ENCODE measurements at regions of chr19 and their contacts with region 1.

Region 1: DNA sequence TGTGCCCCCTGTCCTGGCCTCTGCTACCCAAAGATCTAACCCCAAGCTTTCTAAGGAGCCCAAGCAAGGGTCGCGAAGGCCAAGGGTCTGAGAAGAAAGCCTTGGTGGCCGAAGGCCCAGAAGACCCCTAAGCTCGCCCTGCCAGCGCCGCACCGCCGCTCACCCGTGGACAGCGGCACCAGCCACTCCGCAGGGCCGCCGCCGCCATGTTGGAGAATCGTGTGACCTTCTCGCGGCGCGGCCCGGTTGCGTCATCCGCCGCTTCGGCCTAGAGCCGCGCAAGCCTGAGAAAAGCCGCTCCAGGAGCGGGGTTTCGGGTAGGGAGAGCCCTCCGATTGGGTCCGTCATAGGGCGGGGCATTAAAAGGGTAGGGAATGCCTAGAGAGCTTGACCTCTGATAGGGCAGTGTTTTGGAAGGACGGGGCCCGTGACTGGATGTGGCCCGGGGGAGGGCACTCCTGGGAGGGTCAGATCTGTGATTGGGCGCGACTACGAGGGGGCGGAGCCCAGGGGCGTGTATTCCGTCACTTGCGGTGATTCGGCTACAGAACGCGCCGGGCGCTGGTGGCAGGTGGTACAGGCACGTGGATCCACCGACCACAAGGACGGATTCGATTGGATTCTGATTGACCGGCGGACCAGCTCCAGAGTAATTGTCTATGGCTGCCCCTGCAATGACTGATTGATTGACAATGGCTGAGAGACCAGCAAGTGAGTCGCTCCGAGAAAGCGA is at the start of gene TIMM44:
- DNase-seq: peak; percentile 98
- H3K4me3 ChIP-seq: peak within 1 kb of the TSS; percentile 98
- H3K27me3 ChIP-seq: no peaks in the 10 kb centered on the region
- CTCF ChIP-seq: no peak
- polyA plus RNA-seq, gene TIMM44: 51.1 and 56.6 TPM in 2 replicates

Region 2: DNA sequence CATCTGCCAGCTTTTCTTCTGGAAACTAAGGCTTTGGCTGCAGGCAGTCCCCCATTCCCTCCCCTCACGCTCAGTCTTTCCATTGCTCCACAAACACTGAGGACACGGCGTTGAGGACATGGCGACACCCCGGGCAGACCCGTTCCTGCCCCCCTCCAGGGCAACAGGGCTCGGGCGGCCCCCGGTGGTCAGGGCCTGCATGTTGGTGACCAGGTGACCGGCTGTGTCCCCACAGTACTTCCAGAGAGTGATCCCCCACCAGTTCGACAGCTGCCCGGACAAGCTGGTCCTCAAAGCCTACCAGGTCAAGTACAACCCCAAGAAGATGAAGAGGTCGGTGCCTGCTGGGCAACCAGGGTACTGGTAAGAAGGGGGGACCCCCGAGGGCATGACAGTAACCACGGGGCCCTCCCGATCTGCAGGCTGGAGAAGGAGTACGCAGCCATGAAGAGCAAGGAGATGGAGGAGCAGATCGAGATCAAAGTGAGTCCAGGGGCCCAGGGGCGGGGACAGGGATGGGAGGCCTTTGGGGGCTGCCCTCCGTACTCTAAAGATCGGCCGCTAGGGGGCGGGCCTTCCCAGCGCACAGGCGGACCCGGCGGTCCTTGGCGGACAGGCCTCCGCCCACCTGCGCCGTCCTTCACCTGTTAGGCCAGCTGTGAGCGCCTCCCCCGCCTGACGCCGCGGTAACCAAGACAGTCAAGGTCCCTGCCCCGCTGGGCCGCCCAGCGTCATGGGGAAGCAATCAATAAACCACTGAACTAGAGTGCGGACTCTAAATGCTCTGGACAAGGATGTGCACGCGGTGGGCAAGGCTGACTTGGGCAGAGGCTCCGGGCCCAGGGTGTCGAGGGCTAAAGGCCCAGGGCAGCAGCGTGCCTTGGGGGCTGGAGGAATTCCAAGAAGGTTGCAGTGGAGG is 90.5 kb before region 1 on chr19:
- CTCF ChIA-PET with region 1: interaction called, 17 read pairs
- POLR2A ChIA-PET with region 1: no interaction called
- DNase-seq: no peak
- H3K4me3 ChIP-seq: no peak overlapping the region
- H3K27me3 ChIP-seq: no peaks in the 10 kb centered on the region
- CTCF ChIP-seq: peak; percentile 87

Region 3: GRCh38 chr19:7919610-7920518 is 23.7 kb before region 1 on chr19 and contains the start of gene SNAPC2:
- CTCF ChIA-PET with region 1: interaction called, 11 read pairs
- POLR2A ChIA-PET with region 1: interaction called, 6 read pairs
- DNase-seq: peak; percentile 56
- H3K4me3 ChIP-seq: peak within 1 kb of the TSS; percentile 82
- H3K27me3 ChIP-seq: no peaks in the 10 kb centered on the region
- CTCF ChIP-seq: no peak
- polyA plus RNA-seq, gene SNAPC2: 16.6 and 28.2 TPM in 2 replicates

Region 4: DNA sequence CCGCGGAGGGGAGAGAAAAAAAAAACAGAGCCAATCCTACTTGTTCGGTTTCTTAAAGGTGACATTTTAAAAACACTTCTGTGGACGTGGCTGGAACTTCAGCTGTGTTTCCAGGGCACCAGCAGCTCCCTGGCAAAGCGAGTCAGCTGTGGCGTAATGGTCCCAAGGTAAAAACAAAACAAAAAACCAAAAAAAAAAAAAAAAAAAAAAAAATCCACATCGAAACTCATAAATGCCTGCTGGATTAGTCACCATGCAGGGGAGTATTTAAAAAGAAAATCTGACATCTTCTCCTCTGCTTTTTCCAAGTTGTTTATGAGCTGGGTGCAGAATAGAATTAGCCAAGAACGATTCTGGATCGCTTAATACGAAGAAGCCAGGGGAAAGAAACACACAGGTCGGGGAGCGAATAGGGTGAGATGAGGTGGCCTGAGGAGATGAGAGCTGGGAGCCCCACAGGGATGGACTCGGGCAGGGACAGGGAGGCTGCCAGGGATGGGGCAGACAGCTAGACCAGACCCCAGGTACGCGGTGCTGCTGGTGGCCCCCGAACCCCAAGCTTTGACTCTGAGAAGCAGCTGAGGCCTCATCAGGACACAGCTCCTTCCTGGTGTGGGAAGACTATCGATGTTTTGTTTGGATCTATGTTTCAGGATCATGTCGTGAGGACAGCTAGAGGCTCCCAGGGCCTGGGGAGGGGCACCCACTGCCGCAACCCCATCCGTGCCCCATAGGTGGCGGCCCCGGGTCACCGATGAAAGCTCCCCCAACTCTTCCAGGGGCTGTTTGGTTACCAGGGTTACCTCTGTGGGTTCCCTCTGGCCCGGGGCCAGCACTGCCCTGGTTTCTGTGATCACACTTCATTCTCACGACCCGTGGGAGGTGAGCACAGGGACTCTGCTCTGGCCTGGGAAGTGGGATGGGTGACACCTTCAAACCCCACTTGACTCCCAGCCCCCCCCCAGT is 14.6 kb before region 1 on chr19:
- CTCF ChIA-PET with region 1: interaction called, 34 read pairs
- POLR2A ChIA-PET with region 1: no interaction called
- DNase-seq: peak; percentile 80
- H3K4me3 ChIP-seq: peak overlapping the region; percentile 7; the same call in 1 of the 2 replicates
- H3K27me3 ChIP-seq: no peaks in the 10 kb centered on the region
- CTCF ChIP-seq: peak; percentile 73

Region 5: GRCh38 chr19:8005534-8006256 is 62.1 kb after region 1 on chr19 and contains the start of gene ELAVL1:
- CTCF ChIA-PET with region 1: interaction called, 23 read pairs
- POLR2A ChIA-PET with region 1: no interaction called
- DNase-seq: no peak
- H3K4me3 ChIP-seq: peak within 1 kb of the TSS; percentile 98
- H3K27me3 ChIP-seq: no peaks in the 10 kb centered on the region
- CTCF ChIP-seq: no peak
- polyA plus RNA-seq, gene ELAVL1: 39.9 and 41.2 TPM in 2 replicates

Region 6: GRCh38 chr19:8252922-8253589 is 309.4 kb after region 1 on chr19:
- CTCF ChIA-PET with region 1: interaction called, 57 read pairs
- POLR2A ChIA-PET with region 1: interaction called, 3 read pairs
- DNase-seq: no peak
- H3K4me3 ChIP-seq: no peak overlapping the region
- H3K27me3 ChIP-seq: no peaks in the 10 kb centered on the region
- CTCF ChIP-seq: peak; percentile 91

Measured in BJ (cell line).